Activated CD8-positive, alpha-beta memory T cell treated with anti-CD3 and anti-CD28 coated beads, Interleukin-2, amount 10 ng/mL, durations not matched to agents 7 days and 5 days (primary cell): ENCODE measurements at regions of chr3 and their contacts with region 1.

Region 1: GRCh38 chr3:184543843-184544512 is 17.6 kb upstream of the EPHB3 start:
- DNase-seq: peak; percentile 83
- ATAC-seq: peak; percentile 77
- H3K4me3 Mint-ChIP-seq: no peak overlapping the region
- H3K27ac Mint-ChIP-seq: no peak overlapping the region
- H3K4me1 Mint-ChIP-seq: peaks cover 4% of the 10 kb centered on the region
- H3K27me3 Mint-ChIP-seq: peaks cover 32% of the 10 kb centered on the region

Region 2: GRCh38 chr3:184185461-184186308 is 358.3 kb before region 1 on chr3 and contains the start of gene ABCF3:
- CTCF ChIA-PET with region 1: no interaction called
- DNase-seq: peak; percentile 99
- ATAC-seq: peak; percentile 96
- H3K4me3 Mint-ChIP-seq: peak within 1 kb of the TSS; percentile 86
- H3K27ac Mint-ChIP-seq: peak within 1 kb of the TSS; percentile 91
- H3K4me1 Mint-ChIP-seq: peaks cover 30% of the 10 kb centered on the region
- H3K27me3 Mint-ChIP-seq: no peaks in the 10 kb centered on the region
- total RNA-seq, gene ABCF3: 57.6 to 60.2 TPM

Region 3: GRCh38 chr3:184417619-184418327 is 126.2 kb before region 1 on chr3:
- CTCF ChIA-PET with region 1: interaction called, 13 read pairs
- DNase-seq: peak; percentile 72
- ATAC-seq: peak; percentile 96
- H3K4me3 Mint-ChIP-seq: no peak overlapping the region
- H3K27ac Mint-ChIP-seq: no peak overlapping the region
- H3K4me1 Mint-ChIP-seq: peaks cover 2% of the 10 kb centered on the region
- H3K27me3 Mint-ChIP-seq: peaks cover 6% of the 10 kb centered on the region

Region 4: DNA sequence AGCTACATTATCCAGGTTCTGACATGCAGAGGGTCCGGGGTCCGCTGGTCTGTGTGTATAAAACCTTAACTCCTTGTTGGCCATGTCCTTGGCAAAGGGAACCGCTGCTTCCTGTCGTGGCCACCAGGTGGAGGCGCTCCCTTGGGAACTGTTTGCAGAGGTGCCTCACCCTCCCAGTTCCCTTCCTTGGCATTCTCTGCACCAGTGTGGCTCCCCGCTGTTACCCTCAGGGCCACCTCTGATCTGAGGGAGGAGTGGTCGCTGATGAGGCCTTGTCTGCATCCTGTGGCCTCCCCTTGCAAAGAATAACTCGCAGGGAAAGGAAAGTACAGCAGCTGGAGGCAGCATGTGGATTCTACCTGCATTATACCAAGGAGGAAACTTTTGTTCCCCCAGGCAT is 74.6 kb before region 1 on chr3:
- CTCF ChIA-PET with region 1: interaction called, 24 read pairs
- DNase-seq: peak; percentile 41
- ATAC-seq: no peak
- H3K4me3 Mint-ChIP-seq: no peak overlapping the region
- H3K27ac Mint-ChIP-seq: no peak overlapping the region
- H3K4me1 Mint-ChIP-seq: peaks cover 2% of the 10 kb centered on the region
- H3K27me3 Mint-ChIP-seq: peaks cover 44% of the 10 kb centered on the region

Region 5: GRCh38 chr3:184474897-184475296 is 69.1 kb before region 1 on chr3:
- CTCF ChIA-PET with region 1: interaction called, 24 read pairs
- DNase-seq: peak; percentile 16
- ATAC-seq: no peak
- H3K4me3 Mint-ChIP-seq: no peak overlapping the region
- H3K27ac Mint-ChIP-seq: no peak overlapping the region
- H3K4me1 Mint-ChIP-seq: peaks cover 2% of the 10 kb centered on the region
- H3K27me3 Mint-ChIP-seq: peaks cover 62% of the 10 kb centered on the region

Region 6: GRCh38 chr3:184513276-184514170 is 30.5 kb before region 1 on chr3:
- CTCF ChIA-PET with region 1: interaction called, 74 read pairs
- DNase-seq: peak; percentile 87
- ATAC-seq: peak; percentile 99
- H3K4me3 Mint-ChIP-seq: peak overlapping the region; percentile 19
- H3K27ac Mint-ChIP-seq: no peak overlapping the region
- H3K4me1 Mint-ChIP-seq: peaks cover 10% of the 10 kb centered on the region
- H3K27me3 Mint-ChIP-seq: peaks cover 74% of the 10 kb centered on the region

Region 7: GRCh38 chr3:184523825-184524615 is 20.0 kb before region 1 on chr3:
- CTCF ChIA-PET with region 1: interaction called, 36 read pairs
- DNase-seq: no peak
- ATAC-seq: peak; percentile 65
- H3K4me3 Mint-ChIP-seq: peak overlapping the region; percentile 25
- H3K27ac Mint-ChIP-seq: no peak overlapping the region
- H3K4me1 Mint-ChIP-seq: peaks cover 15% of the 10 kb centered on the region
- H3K27me3 Mint-ChIP-seq: peaks cover 65% of the 10 kb centered on the region

Region 8: GRCh38 chr3:184531626-184532280 is 12.2 kb before region 1 on chr3:
- CTCF ChIA-PET with region 1: interaction called, 36 read pairs
- DNase-seq: peak; percentile 19
- ATAC-seq: no peak
- H3K4me3 Mint-ChIP-seq: no peak overlapping the region
- H3K27ac Mint-ChIP-seq: no peak overlapping the region
- H3K4me1 Mint-ChIP-seq: no peaks in the 10 kb centered on the region
- H3K27me3 Mint-ChIP-seq: peaks cover 57% of the 10 kb centered on the region

Region 9: GRCh38 chr3:184815046-184815930 is 271.3 kb after region 1 on chr3:
- CTCF ChIA-PET with region 1: no interaction called
- DNase-seq: no peak
- ATAC-seq: no peak
- H3K4me3 Mint-ChIP-seq: no peak overlapping the region
- H3K27ac Mint-ChIP-seq: peak overlapping the region; percentile 57
- H3K4me1 Mint-ChIP-seq: peaks cover 50% of the 10 kb centered on the region
- H3K27me3 Mint-ChIP-seq: peaks cover 3% of the 10 kb centered on the region